Caco-2 (cell line): ENCODE measurements at regions of chr5 and their contacts with region 1.

Region 1: DNA sequence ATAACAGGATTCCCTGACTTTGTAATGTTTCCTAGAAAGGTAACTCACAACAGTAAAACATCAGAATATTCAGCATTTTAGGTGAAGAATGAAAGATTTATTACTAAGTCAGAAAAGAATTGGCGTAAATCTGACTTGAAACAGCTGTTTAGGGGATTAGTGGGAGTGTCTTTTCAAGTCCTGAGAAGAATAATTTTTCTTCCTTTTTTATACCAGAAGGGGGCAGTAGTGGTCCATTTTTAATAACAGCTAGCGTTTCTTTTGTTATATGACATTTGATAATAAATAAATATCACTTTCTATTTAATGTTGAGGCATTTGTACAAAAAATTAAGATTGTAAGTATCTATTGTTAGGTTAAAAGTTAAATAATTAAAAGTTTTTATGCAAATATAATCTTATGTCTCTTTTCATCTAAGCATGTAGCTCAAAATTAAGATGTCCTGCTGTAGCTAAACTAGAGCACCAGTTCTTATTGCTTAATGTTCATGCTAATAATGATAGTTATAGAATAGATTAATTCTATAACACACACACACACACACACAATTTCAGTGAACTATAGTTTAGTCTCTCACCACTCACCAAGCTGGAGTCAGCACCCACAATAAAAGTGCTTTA is 258.7 kb upstream of the ARRDC3 start:
- DNase-seq: peak in 1 of 2 experiments; percentile 26
- H3K4me3 ChIP-seq: no peak overlapping the region
- H3K4me3 Mint-ChIP-seq: no peak overlapping the region
- H3K27ac Mint-ChIP-seq: no peak overlapping the region
- H3K4me1 ChIP-seq: no peaks in the 10 kb centered on the region
- H3K4me1 Mint-ChIP-seq: no peaks in the 10 kb centered on the region
- H3K27me3 ChIP-seq: no peaks in the 10 kb centered on the region
- H3K27me3 Mint-ChIP-seq: peaks cover 2% of the 10 kb centered on the region
- CTCF ChIP-seq: peak; percentile 38 to 65

Region 2: DNA sequence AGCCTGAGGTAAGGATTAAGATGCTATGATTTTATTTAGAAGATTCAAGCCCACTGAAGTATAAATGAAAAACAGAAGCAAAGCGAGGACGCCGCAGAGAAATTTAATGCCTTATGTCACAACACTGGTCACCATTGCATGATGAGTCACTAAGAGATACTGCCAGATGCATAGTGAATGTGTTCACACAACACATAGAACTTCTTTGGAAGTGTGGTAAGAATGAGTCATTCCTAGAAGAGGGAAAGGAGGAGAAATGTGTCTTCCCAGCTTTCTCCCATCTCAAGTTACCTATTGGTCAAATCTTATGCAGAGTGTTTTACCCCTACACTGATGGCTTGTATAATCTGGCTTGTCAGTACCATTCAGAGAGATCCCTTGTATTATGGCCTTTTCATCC is 206.6 kb after region 1 on chr5:
- CTCF ChIA-PET with region 1: no interaction called
- POLR2A ChIA-PET with region 1: no interaction called
- intact Hi-C with region 1: loop called (anchors 10 kb)
- DNase-seq: no peak
- H3K4me3 ChIP-seq: no peak overlapping the region
- H3K4me3 Mint-ChIP-seq: no peak overlapping the region
- H3K27ac Mint-ChIP-seq: no peak overlapping the region
- H3K4me1 ChIP-seq: no peaks in the 10 kb centered on the region; the same call in 1 of the 2 replicates
- H3K4me1 Mint-ChIP-seq: no peaks in the 10 kb centered on the region
- H3K27me3 ChIP-seq: no peaks in the 10 kb centered on the region
- H3K27me3 Mint-ChIP-seq: no peaks in the 10 kb centered on the region
- CTCF ChIP-seq: no peak

Region 3: DNA sequence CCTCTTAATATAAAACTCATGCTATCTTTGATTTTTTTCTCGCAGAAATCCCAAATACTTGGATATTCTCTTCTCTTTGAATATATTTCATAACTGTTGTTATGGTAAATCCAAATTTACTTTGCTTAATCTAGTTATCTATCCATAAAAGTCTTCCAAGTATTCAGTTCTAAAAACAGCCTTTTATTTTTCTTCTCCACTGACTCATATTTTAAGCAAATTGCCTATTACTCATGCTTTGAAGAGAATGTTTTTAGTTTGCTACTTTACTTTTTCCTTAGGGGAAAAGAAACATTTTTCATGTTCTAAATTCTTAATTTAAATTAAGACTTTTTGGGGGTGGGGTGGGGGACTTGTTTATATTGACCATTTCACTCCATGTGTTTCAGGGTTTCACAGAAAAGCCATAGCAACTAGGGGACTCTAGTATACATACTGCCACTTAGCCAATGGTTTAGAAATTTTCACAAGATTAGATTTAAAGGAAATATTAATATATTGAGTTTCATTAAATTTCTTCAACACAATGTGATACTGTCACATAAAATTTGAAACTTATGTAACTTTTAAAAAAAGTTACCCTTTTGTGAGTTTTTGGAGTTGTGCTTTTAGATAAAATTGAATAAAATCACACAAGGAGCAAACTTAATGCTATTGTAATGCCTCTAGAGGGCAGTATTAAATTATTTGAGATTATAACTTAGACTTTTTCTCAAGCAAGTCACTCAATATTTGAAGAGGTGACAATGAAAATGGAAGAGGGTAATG is 287.1 kb after region 1 on chr5:
- CTCF ChIA-PET with region 1: no interaction called
- POLR2A ChIA-PET with region 1: no interaction called
- intact Hi-C with region 1: loop called (anchors 10 kb)
- DNase-seq: no peak
- H3K4me3 ChIP-seq: no peak overlapping the region
- H3K4me3 Mint-ChIP-seq: no peak overlapping the region
- H3K27ac Mint-ChIP-seq: no peak overlapping the region
- H3K4me1 ChIP-seq: no peaks in the 10 kb centered on the region
- H3K4me1 Mint-ChIP-seq: no peaks in the 10 kb centered on the region
- H3K27me3 ChIP-seq: no peaks in the 10 kb centered on the region
- H3K27me3 Mint-ChIP-seq: peaks cover 13% of the 10 kb centered on the region
- CTCF ChIP-seq: peak; percentile 31 to 41

Region 4: GRCh38 chr5:92560698-92561361 is 919.0 kb after region 1 on chr5:
- CTCF ChIA-PET with region 1: no interaction called
- POLR2A ChIA-PET with region 1: no interaction called
- intact Hi-C with region 1: loop called (anchors 5 kb)
- DNase-seq: no peak
- H3K4me3 ChIP-seq: no peak overlapping the region
- H3K4me3 Mint-ChIP-seq: no peak overlapping the region
- H3K27ac Mint-ChIP-seq: no peak overlapping the region
- H3K4me1 ChIP-seq: no peaks in the 10 kb centered on the region
- H3K4me1 Mint-ChIP-seq: no peaks in the 10 kb centered on the region
- H3K27me3 ChIP-seq: no peaks in the 10 kb centered on the region
- H3K27me3 Mint-ChIP-seq: no peaks in the 10 kb centered on the region
- CTCF ChIP-seq: no peak